Activated T-helper 2 cell treated with anti-CD3 and anti-CD28 coated beads, Interferon-gamma antibody, Interleukin-2, Interleukin-4, amounts not matched to agents 10 μg/mL and 5 μg/mL and 100 μg/mL, durations not matched to agents 14 hours and 24 hours and 36 hours (primary cell): ENCODE measurements at regions of chr20 and their contacts with region 1.

Region 1: GRCh38 chr20:43456809-43457639 is 672 bp upstream of the SRSF6 start:
- DNase-seq: peak; percentile 85
- H3K4me3 Mint-ChIP-seq: peak overlapping the region; percentile 88
- H3K27ac Mint-ChIP-seq: peak overlapping the region; percentile 99
- H3K4me1 Mint-ChIP-seq: peaks cover 22% of the 10 kb centered on the region
- H3K27me3 Mint-ChIP-seq: peaks cover 5% of the 10 kb centered on the region

Region 2: DNA sequence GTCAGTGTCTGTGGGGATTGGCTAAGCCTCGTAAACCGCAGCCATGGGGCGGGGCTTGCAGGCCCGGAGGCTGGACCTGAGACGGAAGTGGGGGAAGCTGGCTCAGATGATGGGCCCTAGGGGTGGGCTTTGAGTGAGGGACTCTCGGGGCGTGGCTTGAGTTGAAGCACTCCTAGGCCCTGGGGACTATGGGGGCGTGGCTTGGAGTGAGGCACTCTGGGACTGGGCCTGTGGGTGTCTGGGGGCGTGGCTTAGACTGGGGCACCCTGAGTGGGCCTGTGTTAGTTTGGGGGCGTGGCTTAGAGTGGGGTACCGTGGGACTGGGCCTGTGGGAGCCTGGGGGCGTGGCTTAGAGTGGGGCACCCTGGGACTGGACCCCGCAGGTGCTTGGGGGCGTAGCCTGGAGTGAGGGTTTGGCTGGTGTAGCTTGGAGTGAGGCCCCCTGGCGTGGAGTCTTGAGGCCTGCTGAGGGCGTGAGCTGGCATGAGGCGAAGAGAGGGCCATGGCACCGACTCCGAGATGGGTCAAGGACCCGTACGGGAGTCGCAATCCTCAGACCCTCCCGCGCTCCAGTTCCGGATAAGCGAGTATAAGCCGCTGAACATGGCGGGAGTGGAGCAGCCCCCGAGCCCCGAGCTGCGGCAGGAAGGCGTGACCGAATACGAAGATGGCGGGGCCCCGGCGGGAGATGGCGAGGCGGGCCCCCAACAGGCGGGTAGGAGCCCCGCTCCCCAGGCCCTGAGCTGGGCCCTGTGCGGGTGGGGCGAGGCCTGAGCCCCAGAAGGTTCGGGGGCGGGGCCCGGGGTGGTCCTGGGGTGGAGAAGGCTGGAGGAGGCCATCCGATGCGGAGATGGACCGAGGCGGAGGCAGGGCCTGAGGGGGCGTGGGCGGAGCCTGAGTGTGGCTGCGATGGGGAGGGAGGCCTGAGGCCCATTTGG is 57.3 kb after region 1 on chr20:
- intact Hi-C with region 1: loop called (anchors 1 kb)
- DNase-seq: peak; percentile 91
- H3K4me3 Mint-ChIP-seq: peak overlapping the region; percentile 95
- H3K27ac Mint-ChIP-seq: peak overlapping the region; percentile 93
- H3K4me1 Mint-ChIP-seq: peaks cover 4% of the 10 kb centered on the region
- H3K27me3 Mint-ChIP-seq: peaks cover 2% of the 10 kb centered on the region

Region 3: GRCh38 chr20:43590392-43591323 is 133.6 kb after region 1 on chr20 and contains the start of gene IFT52:
- intact Hi-C with region 1: loop called (anchors 1 kb)
- DNase-seq: peak; percentile 85
- H3K4me3 Mint-ChIP-seq: peak within 1 kb of the TSS; percentile 87
- H3K27ac Mint-ChIP-seq: peak within 1 kb of the TSS; percentile 93
- H3K4me1 Mint-ChIP-seq: peaks cover 12% of the 10 kb centered on the region
- H3K27me3 Mint-ChIP-seq: peaks cover under 1% of the 10 kb centered on the region
- total RNA-seq, gene IFT52: 17.7 and 19.0 TPM in 2 replicates